Psoas muscle (tissue), 8 donors: ENCODE measurements at regions of chr13 and their contacts with region 1.

Region 1: GRCh38 chr13:54536112-54536511 is 1507.5 kb downstream of the OLFM4 start:
- DNase-seq: no peak
- ATAC-seq: no peak
- H3K4me3 ChIP-seq: no peak overlapping the region
- H3K27ac ChIP-seq: no peak overlapping the region
- H3K4me1 ChIP-seq: no peaks in the 10 kb centered on the region
- H3K27me3 ChIP-seq: no peaks in the 10 kb centered on the region
- CTCF ChIP-seq: no peak

Region 2: DNA sequence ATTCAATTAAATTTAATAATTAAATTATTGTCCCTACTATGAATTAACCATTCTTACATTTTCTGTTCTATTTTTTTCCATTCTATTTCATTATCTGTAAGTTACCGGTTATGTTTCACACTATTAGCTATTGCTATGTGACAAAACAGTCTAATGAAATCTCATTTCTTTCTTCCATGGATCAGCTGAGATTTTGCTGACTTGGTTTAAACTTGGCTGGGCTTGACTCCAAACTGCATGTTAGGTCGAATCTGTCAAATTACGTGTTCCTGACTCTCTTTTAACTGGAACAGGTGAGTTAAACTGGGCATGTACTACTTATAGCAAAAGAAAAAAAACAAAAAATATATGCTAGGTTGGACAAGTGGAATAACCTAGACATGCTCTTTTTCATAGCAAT is 43.1 kb before region 1 on chr13:
- intact Hi-C with region 1: no loop called
- DNase-seq: no peak
- ATAC-seq: no peak
- H3K4me3 ChIP-seq: no peak overlapping the region
- H3K27ac ChIP-seq: no peak overlapping the region
- H3K4me1 ChIP-seq: no peaks in the 10 kb centered on the region
- H3K27me3 ChIP-seq: no peaks in the 10 kb centered on the region
- CTCF ChIP-seq: no peak

Region 3: DNA sequence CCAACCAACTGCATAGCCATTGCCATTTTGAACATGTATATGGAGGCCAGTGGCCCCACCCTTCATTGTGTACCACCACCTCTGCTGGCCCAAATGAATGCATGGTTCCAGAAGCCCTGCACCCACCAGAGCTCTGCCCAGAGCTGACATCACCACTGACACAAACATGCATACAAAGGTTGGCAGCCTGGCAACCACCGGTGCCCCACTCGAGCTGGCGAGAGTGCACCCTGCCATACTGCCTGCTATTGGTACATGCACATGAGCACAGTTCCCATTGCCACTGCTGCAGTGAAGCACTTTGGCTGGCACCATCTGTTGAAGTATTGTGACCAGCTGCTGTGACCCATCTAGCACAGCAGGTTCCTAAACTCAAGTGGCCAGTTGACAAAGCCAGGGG is 57.4 kb after region 1 on chr13:
- intact Hi-C with region 1: loop called in 1 of 2 experiments (anchors 2 kb)
- DNase-seq: no peak
- ATAC-seq: no peak
- H3K4me3 ChIP-seq: no peak overlapping the region
- H3K27ac ChIP-seq: no peak overlapping the region
- H3K4me1 ChIP-seq: no peaks in the 10 kb centered on the region
- H3K27me3 ChIP-seq: no peaks in the 10 kb centered on the region
- CTCF ChIP-seq: no peak

Region 4: GRCh38 chr13:54884682-54885081 is 348.6 kb after region 1 on chr13:
- intact Hi-C with region 1: no loop called
- DNase-seq: no peak
- ATAC-seq: no peak
- H3K4me3 ChIP-seq: no peak overlapping the region
- H3K27ac ChIP-seq: no peak overlapping the region
- H3K4me1 ChIP-seq: no peaks in the 10 kb centered on the region
- H3K27me3 ChIP-seq: peaks cover 0 to 2% (median 0%) of the 10 kb centered on the region in 3 donors
- CTCF ChIP-seq: no peak